ENCODE measurements at regions of chr4 and their contacts with region 1.

Region 1: GRCh38 chr4:123096038-123096437 is 173.6 kb upstream of the NUDT6 start:
- DNase-seq: peak; percentile 57
- ATAC-seq: peak; percentile 70
- H3K4me3 ChIP-seq: no peak overlapping the region
- H3K27ac ChIP-seq: no peak overlapping the region
- H3K4me1 ChIP-seq: no peaks in the 10 kb centered on the region
- H3K27me3 ChIP-seq: no peaks in the 10 kb centered on the region
- CTCF ChIP-seq: peak; percentile 74

Region 2: DNA sequence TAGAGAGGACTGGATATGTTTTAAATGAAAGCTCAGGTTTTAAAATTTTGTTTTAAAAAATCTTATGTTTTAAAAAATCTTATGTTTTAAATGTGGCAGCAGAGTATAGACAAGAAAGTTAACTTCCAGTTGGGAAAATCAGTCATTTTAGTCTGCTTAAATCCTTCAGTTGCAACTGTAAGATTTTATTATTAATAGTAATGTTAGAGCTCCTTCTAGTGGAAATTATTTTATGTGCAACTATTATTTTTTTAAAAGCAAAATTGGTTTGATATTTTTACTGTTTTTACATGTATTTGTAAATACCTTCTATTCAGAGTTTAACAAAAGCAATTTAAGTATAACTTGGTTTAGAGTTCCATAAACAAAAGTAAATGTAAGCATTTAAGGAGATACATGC is 165.2 kb before region 1 on chr4:
- CTCF ChIA-PET with region 1: no interaction called
- POLR2A ChIA-PET with region 1: no interaction called
- intact Hi-C with region 1: loop called (anchors 10 kb)
- DNase-seq: peak; percentile 56
- ATAC-seq: no peak
- H3K4me3 ChIP-seq: no peak overlapping the region
- H3K27ac ChIP-seq: no peak overlapping the region
- H3K4me1 ChIP-seq: peaks cover under 1% of the 10 kb centered on the region; the same call in 1 of the 2 replicates
- H3K27me3 ChIP-seq: no peaks in the 10 kb centered on the region
- CTCF ChIP-seq: peak; percentile 63

Region 3: DNA sequence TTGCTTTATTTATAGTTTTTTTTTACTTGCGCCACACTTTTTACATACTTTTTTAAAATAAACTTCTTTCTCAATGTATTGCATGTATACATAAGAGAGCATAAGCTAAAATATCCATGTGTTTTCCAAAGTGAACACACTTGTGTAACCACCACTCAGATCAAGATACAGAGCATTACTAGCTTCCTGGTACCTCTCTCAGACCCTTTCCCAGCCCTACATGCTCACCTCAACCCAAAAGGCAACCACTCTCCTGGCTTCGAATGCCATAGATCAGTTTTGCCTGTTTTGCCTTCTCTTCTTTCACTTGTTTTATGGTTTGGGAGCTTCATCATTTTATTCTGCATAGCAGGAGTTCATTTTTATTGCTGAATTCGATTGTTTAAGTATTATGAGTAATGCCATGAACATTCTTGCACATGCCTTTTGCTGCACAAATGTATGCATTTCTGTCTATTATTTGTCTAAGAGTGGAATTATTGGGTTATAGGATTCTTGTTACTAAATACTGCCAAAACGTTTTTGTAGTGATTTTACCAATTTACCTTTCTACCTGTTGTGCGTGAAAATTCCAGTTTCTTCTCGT is 127.7 kb before region 1 on chr4:
- CTCF ChIA-PET with region 1: no interaction called
- POLR2A ChIA-PET with region 1: no interaction called
- intact Hi-C with region 1: loop called (anchors 5 kb)
- DNase-seq: peak; percentile 77
- ATAC-seq: peak; percentile 91
- H3K4me3 ChIP-seq: peak overlapping the region; percentile 19; the same call in 1 of the 2 replicates
- H3K27ac ChIP-seq: peak overlapping the region; percentile 45
- H3K4me1 ChIP-seq: peaks cover 16% of the 10 kb centered on the region
- H3K27me3 ChIP-seq: no peaks in the 10 kb centered on the region
- CTCF ChIP-seq: no peak

Region 4: GRCh38 chr4:123024710-123025109 is 71.3 kb before region 1 on chr4:
- CTCF ChIA-PET with region 1: no interaction called
- POLR2A ChIA-PET with region 1: no interaction called
- intact Hi-C with region 1: loop called (anchors 5 kb)
- DNase-seq: no peak
- ATAC-seq: no peak
- H3K4me3 ChIP-seq: no peak overlapping the region
- H3K27ac ChIP-seq: no peak overlapping the region
- H3K4me1 ChIP-seq: peaks cover 10% of the 10 kb centered on the region; the same call in 1 of the 2 replicates
- H3K27me3 ChIP-seq: no peaks in the 10 kb centered on the region
- CTCF ChIP-seq: no peak

Region 5: GRCh38 chr4:123083646-123084045 is 12.4 kb before region 1 on chr4:
- CTCF ChIA-PET with region 1: no interaction called
- POLR2A ChIA-PET with region 1: no interaction called
- intact Hi-C with region 1: no loop called
- DNase-seq: no peak
- ATAC-seq: no peak
- H3K4me3 ChIP-seq: no peak overlapping the region
- H3K27ac ChIP-seq: no peak overlapping the region
- H3K4me1 ChIP-seq: no peaks in the 10 kb centered on the region
- H3K27me3 ChIP-seq: no peaks in the 10 kb centered on the region
- CTCF ChIP-seq: no peak

Region 6: DNA sequence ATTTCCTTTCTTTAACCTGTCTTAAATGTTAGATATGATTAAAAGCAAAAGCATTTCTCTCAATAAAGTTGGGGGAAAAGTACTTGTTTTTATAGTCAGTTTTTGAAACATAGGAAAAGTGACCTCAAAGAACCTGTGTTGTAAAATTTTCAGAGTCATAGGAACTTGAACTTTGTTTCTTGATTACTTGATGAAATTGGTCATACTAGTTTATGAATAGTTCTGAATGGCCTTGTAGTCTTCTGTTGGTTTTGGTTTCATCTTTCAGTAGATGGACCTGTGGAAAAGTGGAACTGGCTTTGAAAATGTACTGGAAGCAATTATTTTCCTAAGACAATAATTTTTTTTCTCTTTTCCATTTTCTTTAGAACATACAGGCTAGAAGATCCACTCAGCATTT is 48.6 kb after region 1 on chr4:
- CTCF ChIA-PET with region 1: no interaction called
- POLR2A ChIA-PET with region 1: no interaction called
- intact Hi-C with region 1: no loop called
- DNase-seq: no peak
- ATAC-seq: no peak
- H3K4me3 ChIP-seq: no peak overlapping the region
- H3K27ac ChIP-seq: no peak overlapping the region
- H3K4me1 ChIP-seq: no peaks in the 10 kb centered on the region
- H3K27me3 ChIP-seq: no peaks in the 10 kb centered on the region
- CTCF ChIP-seq: no peak